ENCODE measurements at regions of chr12 and their contacts with region 1.

Region 1: DNA sequence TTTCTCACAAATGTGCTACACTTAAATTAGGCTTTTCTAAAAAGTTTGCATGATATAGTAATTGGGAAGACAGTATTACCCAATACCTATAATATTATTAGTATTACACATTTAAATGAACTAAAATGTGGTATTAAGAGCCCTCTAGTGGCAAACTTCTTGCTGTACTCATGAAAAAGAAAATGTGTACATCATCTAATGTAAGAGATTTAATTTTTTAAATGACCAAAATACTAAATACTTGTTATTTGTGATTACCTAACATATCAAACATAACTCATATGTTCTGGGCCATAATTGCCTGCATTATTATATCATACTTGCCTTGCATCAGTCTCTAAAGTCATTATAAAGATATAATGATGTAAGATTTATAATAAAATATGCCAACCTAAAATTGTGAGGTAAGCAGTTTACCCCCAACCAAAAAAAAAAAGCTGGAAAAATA is 64.2 kb downstream of the DNAI7 start:
- DNase-seq: peak; percentile 12 to 75 (median 34)
- H3K4me3 ChIP-seq: no peak overlapping the region
- H3K4me3 Mint-ChIP-seq: no peak overlapping the region
- H3K27ac ChIP-seq: no peak overlapping the region
- H3K27ac Mint-ChIP-seq: no peak overlapping the region
- H3K4me1 ChIP-seq: no peaks in the 10 kb centered on the region
- H3K4me1 Mint-ChIP-seq: no peaks in the 10 kb centered on the region
- H3K27me3 ChIP-seq: no peaks in the 10 kb centered on the region
- H3K27me3 Mint-ChIP-seq: peaks cover 0 to 2% (median 0%) of the 10 kb centered on the region in 3 donors
- CTCF ChIP-seq: peak; percentile 85

Region 2: DNA sequence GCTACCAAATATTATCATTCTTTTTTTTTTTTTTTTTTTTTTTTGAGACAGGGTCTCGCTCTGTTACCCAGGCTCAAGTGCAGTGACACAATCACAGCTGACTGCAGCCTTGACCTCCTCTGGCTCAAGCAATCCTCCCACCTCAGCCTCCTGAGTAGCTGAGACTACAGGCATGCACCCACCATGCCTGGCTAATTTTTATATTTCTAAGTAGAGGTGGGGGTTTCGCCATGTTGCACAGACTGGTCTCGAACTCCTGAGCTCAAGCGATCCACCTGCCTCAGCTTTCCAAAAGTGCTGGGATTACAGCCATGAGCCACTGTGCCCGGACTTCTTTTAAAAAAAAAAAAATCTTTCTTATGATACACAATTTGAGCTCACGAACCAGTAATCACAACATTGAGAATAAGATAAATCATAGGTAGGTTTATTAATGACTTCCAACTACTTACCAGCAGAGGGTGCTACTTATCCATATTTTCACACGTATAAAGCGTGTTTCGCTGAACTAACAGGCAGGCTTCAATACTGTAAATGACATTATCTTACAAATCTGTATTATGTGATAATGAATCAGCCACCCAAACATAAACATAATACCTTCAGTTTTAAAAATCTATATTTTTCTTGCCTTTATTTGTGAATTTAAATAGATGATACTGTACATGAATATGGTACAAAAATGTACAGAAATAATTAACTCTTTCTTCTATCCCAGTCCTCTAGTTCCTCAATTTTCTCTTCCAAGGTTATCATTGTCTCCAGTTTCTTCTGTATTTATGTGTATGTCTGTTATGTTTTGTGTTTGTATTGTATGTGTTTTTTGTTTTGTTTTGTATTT is 139.3 kb before region 1 on chr12:
- intact Hi-C with region 1: loop called (anchors 2 to 5 kb)
- DNase-seq: peak; percentile 63 to 75 (median 67)
- H3K4me3 ChIP-seq: no peak overlapping the region
- H3K4me3 Mint-ChIP-seq: no peak overlapping the region
- H3K27ac ChIP-seq: no peak overlapping the region
- H3K27ac Mint-ChIP-seq: no peak overlapping the region
- H3K4me1 ChIP-seq: no peaks in the 10 kb centered on the region
- H3K4me1 Mint-ChIP-seq: peaks cover 3% of the 10 kb centered on the region
- H3K27me3 ChIP-seq: no peaks in the 10 kb centered on the region
- H3K27me3 Mint-ChIP-seq: peaks cover 2 to 8% (median 5%) of the 10 kb centered on the region in 3 donors
- CTCF ChIP-seq: peak; percentile 77

Region 3: DNA sequence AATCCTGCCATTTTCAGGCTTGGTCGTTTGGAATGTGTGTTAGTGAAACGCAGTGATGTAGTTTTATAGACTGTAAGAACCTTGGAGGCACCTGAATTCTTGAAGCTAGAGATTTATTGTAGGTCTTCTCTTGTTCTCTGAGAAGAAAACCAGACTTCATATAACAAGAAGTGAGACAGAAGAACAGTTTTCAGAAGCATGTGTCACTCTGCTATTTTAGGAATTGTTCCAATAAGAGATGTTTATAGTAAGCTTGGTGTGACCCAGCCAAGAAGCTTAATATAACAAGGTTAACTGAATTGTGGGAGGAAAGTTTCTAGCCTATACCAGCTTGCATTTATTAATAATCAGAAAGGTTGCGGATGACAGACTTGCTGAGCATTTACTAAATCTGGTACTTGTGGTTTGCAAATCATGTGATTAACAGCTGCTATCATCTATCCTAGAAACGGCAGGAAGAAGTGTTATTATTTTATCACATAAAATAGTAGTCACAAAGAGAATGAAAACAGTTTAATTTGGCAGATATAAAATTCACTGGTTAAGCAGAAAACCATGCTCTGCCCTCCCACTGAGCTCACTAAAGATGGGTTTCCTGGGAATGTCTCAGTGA is 132.7 kb before region 1 on chr12:
- intact Hi-C with region 1: loop called in 1 of 2 experiments (anchors 5 kb)
- DNase-seq: no peak
- H3K4me3 ChIP-seq: no peak overlapping the region
- H3K4me3 Mint-ChIP-seq: no peak overlapping the region
- H3K27ac ChIP-seq: no peak overlapping the region
- H3K27ac Mint-ChIP-seq: no peak overlapping the region
- H3K4me1 ChIP-seq: peaks cover 6 to 7% of the 10 kb centered on the region in 2 donors
- H3K4me1 Mint-ChIP-seq: peaks cover 6% of the 10 kb centered on the region
- H3K27me3 ChIP-seq: no peaks in the 10 kb centered on the region
- H3K27me3 Mint-ChIP-seq: peaks cover 0 to 3% (median 0%) of the 10 kb centered on the region in 3 donors
- CTCF ChIP-seq: no peak

Region 4: GRCh38 chr12:25404955-25405354 is 274.2 kb after region 1 on chr12:
- intact Hi-C with region 1: no loop called
- DNase-seq: no peak
- H3K4me3 ChIP-seq: no peak overlapping the region
- H3K4me3 Mint-ChIP-seq: no peak overlapping the region
- H3K27ac ChIP-seq: no peak overlapping the region
- H3K27ac Mint-ChIP-seq: no peak overlapping the region
- H3K4me1 ChIP-seq: no peaks in the 10 kb centered on the region
- H3K4me1 Mint-ChIP-seq: no peaks in the 10 kb centered on the region
- H3K27me3 ChIP-seq: no peaks in the 10 kb centered on the region
- H3K27me3 Mint-ChIP-seq: peaks cover 0 to 4% (median 4%) of the 10 kb centered on the region in 3 donors
- CTCF ChIP-seq: no peak

Measured in CD14-positive monocyte (primary cell).